ENCODE measurements at regions of chr9 and their contacts with region 1.

Region 1: GRCh38 chr9:91424403-91425176 is 958 bp upstream of the NFIL3 start:
- DNase-seq: no peak
- H3K4me3 ChIP-seq: peak overlapping the region; percentile 81 to 87 (median 85)
- H3K27ac ChIP-seq: peak overlapping the region; percentile 98 to 100 (median 100)
- H3K4me1 ChIP-seq: peaks cover 12 to 80% (median 24%) of the 10 kb centered on the region in 3 donors
- H3K27me3 ChIP-seq: peaks cover 0 to 7% (median 0%) of the 10 kb centered on the region in 4 donors
- CTCF ChIP-seq: peak in 3 of 6 experiments; percentile 10 to 29 (median 20)
- POLR2A ChIP-seq: peak in 2 of 4 donors; percentile 24 to 27

Region 2: DNA sequence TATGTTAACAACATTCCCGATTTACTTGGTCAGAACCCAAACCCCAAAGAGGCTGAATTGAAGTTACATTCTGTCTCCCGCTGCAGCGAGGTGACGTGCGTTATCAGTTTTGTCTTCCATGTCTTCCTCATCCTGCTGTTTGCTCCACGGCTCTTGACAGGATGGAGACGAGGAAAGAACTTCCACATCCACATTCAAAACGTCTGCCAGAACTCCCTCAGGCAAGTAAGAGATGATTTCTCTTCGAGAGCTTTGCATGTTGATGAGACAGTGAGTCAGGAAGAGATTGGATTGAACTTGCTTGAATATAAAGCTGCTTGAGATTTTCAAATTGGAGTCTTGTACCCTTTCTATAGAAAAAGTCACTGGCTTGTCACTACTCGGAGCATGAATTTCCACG is 305.4 kb before region 1 on chr9:
- intact Hi-C with region 1: no loop called
- DNase-seq: no peak
- H3K4me3 ChIP-seq: no peak overlapping the region
- H3K27ac ChIP-seq: peak overlapping the region in 3 of 4 donors; percentile 35 to 79 (median 67)
- H3K4me1 ChIP-seq: peaks cover 0 to 42% (median 18%) of the 10 kb centered on the region in 3 donors
- H3K27me3 ChIP-seq: no peaks in the 10 kb centered on the region
- CTCF ChIP-seq: no peak
- POLR2A ChIP-seq: no peak

Region 3: GRCh38 chr9:91197232-91198181 is 227.1 kb before region 1 on chr9:
- intact Hi-C with region 1: loop called (anchors 5 kb)
- DNase-seq: no peak
- H3K4me3 ChIP-seq: no peak overlapping the region
- H3K27ac ChIP-seq: peak overlapping the region; percentile 72 to 99 (median 92)
- H3K4me1 ChIP-seq: peaks cover 37 to 84% (median 66%) of the 10 kb centered on the region in 3 donors
- H3K27me3 ChIP-seq: no peaks in the 10 kb centered on the region
- CTCF ChIP-seq: no peak
- POLR2A ChIP-seq: peak in 1 of 4 donors; percentile 15

Region 4: DNA sequence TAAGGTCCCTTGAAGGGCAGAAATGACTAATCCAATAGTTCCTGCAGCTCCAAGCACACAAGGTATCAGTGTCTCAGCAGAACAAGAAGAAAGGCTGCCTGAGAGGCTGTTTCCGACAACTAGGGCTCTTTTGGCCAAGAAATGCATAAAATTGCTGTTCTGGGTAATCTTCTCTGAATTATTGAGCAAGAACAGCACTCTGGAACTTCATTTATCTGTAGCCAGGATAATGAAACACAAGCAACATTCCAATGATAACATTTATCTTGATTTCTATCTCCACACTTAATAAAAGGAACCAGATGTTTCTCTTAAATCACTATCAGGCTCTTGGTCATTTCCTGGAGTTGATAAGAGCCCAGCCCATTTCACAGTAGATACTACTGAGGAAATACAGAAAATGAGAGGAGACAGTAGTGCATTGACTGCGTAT is 45.9 kb before region 1 on chr9:
- intact Hi-C with region 1: no loop called
- DNase-seq: no peak
- H3K4me3 ChIP-seq: no peak overlapping the region
- H3K27ac ChIP-seq: no peak overlapping the region
- H3K4me1 ChIP-seq: no peaks in the 10 kb centered on the region
- H3K27me3 ChIP-seq: no peaks in the 10 kb centered on the region
- CTCF ChIP-seq: no peak
- POLR2A ChIP-seq: no peak

Region 5: DNA sequence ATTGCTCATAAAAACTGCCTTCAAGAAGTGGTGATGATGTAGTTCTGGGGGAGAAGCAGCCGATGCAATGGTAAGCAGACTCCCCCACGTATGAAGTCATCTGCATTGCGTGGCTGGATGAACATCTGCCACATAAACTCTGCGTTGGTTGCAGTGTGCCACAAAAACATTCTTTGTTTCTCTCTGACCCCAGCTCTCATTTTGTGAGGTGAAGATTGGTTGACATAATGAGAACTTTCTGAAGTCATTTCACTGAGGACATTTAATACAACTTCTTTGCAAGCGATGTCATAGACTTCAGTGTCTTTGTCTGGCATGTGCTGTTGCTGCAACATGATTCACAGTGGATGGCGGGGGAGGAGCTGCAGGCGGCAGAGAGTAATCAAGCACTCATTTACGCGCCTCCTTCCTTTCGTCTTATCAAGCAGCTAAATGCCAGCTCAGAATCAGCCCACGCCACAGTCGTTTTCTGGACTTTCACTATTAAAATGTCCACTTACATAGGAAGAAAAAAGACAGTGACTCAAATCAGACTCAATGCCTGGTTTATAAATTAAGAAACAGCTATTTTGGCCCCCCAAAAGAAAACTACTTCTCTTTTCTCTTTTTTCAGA is 90.6 kb after region 1 on chr9:
- intact Hi-C with region 1: no loop called
- DNase-seq: no peak
- H3K4me3 ChIP-seq: peak overlapping the region in 2 of 4 donors; percentile 3 to 5
- H3K27ac ChIP-seq: no peak overlapping the region
- H3K4me1 ChIP-seq: no peaks in the 10 kb centered on the region
- H3K27me3 ChIP-seq: peaks cover 0 to 8% (median 0%) of the 10 kb centered on the region in 4 donors
- CTCF ChIP-seq: no peak
- POLR2A ChIP-seq: no peak

Region 6: GRCh38 chr9:91572044-91572443 is 147.5 kb after region 1 on chr9:
- intact Hi-C with region 1: no loop called
- DNase-seq: no peak
- H3K4me3 ChIP-seq: no peak overlapping the region
- H3K27ac ChIP-seq: no peak overlapping the region
- H3K4me1 ChIP-seq: peaks cover 0 to 21% (median 7%) of the 10 kb centered on the region in 3 donors
- H3K27me3 ChIP-seq: peaks cover 0 to 90% (median 4%) of the 10 kb centered on the region in 4 donors
- CTCF ChIP-seq: no peak
- POLR2A ChIP-seq: no peak

Measured in esophagus squamous epithelium (tissue), 5 donors.